HCT116 (cell line): ENCODE measurements at regions of chr10 and their contacts with region 1.

Region 1: DNA sequence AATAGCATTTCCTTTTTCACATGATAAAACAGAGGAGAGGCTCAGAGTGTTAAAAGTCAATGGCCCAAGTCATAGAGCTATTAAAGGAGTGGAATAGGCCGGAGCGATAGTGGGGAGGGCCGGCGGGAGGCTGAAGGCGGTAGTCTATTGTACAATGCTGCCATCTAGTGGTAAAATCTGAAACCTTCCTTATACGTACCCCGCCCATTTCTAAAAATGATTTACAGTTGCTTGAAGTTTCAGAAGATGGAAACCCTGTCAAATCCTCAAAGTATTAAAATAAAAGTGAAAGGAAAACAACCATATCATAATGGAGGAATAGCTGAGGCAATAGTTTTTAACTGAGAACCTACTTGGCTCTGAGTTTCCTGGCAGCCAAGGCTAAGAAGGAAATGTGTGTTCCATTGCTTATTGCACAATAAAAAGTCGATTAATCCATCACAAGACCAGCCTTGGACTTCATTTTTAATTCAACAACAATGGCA is 209.1 kb downstream of the CCSER2 start:
- DNase-seq: peak; percentile 40
- ATAC-seq: peak; percentile 65
- H3K4me3 ChIP-seq: no peak overlapping the region
- H3K27ac ChIP-seq: no peak overlapping the region
- H3K4me1 ChIP-seq: peaks cover 0 to 24% of the 10 kb centered on the region in 2 experiments; a peak in 2 of 4 replicates
- H3K27me3 ChIP-seq: no peaks in the 10 kb centered on the region
- CTCF ChIP-seq: peak; percentile 51 to 90 (median 90); a peak in 5 of 6 replicates
- POLR2A ChIP-seq: no peak
- RAD21 ChIP-seq: peak; percentile 97

Region 2: DNA sequence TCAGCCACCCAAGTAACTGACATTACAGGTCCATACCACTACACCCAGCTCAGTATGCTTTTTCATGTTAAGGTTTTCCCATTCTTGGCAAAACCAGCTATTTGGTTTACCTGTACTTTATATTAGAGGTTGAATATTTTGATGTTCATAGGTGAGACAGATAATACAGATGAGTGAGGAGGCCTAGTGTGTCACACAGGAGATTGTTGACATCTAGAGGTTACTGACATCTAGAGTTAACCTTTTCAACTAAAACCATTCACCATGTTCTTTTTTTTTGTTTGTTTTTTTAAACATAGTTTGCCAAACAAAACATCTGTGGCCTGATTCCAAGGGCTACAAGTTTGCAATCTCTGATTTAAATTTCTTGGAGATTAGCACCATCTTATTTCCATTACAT is 390.1 kb before region 1 on chr10:
- CTCF ChIA-PET with region 1: interaction called, 3 read pairs
- POLR2A ChIA-PET with region 1: no interaction called
- RAD21 ChIA-PET with region 1: no interaction called
- intact Hi-C with region 1: loop called (anchors 5 kb)
- DNase-seq: no peak
- ATAC-seq: no peak
- H3K4me3 ChIP-seq: no peak overlapping the region
- H3K27ac ChIP-seq: no peak overlapping the region
- H3K4me1 ChIP-seq: no peaks in the 10 kb centered on the region
- H3K27me3 ChIP-seq: no peaks in the 10 kb centered on the region
- CTCF ChIP-seq: no peak
- POLR2A ChIP-seq: no peak
- RAD21 ChIP-seq: no peak

Region 3: DNA sequence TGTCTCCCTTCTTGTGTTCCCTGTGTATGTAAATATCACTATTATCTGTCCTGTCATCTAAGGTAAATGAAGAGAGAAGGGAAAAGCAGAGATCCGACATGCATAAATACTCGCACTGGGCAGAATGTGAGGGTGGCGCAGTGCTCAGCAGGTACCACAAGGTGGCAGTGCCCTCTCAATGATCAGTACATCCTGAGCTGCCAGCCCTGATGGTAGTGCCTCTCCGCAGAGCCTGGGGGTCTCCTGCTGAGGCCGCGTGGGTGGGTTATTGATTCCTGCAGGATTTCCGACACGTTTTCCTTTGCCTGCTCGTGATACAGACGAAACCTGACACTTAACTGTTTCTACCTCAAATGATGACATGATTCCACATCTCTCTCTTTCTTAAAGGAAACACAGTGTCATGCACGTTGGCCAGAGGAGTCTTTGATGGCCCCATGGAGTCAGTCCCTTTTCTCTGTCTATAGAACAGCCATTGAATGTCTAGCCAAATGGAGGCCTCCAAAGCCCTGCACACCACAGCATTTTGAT is 272.8 kb before region 1 on chr10:
- CTCF ChIA-PET with region 1: interaction called, 268 read pairs
- POLR2A ChIA-PET with region 1: interaction called, 4 read pairs
- RAD21 ChIA-PET with region 1: interaction called, 9 to 16 read pairs
- intact Hi-C with region 1: loop called (anchors 1 kb)
- DNase-seq: peak; percentile 48
- ATAC-seq: peak; percentile 95
- H3K4me3 ChIP-seq: no peak overlapping the region
- H3K27ac ChIP-seq: no peak overlapping the region
- H3K4me1 ChIP-seq: peaks cover 0 to 17% of the 10 kb centered on the region in 2 experiments; a peak in 2 of 4 replicates
- H3K27me3 ChIP-seq: no peaks in the 10 kb centered on the region
- CTCF ChIP-seq: peak; percentile 80 to 96 (median 91)
- POLR2A ChIP-seq: no peak
- RAD21 ChIP-seq: peak; percentile 95

Region 4: DNA sequence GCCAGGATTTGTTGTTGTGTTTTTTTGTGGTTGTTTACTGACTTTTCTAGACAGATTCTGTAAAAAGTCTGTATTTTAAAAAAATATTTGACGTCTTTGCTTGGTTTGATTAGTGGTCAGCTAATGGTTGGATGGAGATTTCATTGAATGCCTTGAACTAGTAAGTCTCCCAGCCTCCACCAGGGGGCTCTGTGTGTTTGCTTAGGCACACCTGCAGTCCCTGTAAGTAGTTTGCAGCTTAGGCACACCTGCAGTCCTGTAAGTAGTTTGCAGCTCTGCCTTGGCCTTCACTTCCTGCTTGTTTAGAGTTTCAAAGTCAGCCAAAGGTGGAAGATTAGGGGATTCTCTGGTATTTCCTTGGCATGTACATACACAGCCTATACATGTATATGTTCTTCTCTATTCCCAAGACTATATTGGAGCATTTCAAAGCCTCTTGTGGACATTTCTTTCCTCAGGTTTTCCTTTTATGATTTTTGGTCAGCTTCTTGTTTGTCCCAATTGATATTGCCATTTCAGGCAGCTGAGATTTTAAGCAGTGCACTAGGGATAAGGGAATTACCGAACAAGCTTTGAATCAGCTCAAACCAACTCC is 107.5 kb before region 1 on chr10:
- CTCF ChIA-PET with region 1: interaction called, 53 read pairs
- POLR2A ChIA-PET with region 1: no interaction called
- RAD21 ChIA-PET with region 1: interaction called, 18 to 19 read pairs
- intact Hi-C with region 1: loop called (anchors 1 kb)
- DNase-seq: peak; percentile 61
- ATAC-seq: peak; percentile 98
- H3K4me3 ChIP-seq: no peak overlapping the region
- H3K27ac ChIP-seq: no peak overlapping the region
- H3K4me1 ChIP-seq: peaks cover 0 to 6% of the 10 kb centered on the region in 2 experiments; a peak in 2 of 4 replicates
- H3K27me3 ChIP-seq: no peaks in the 10 kb centered on the region
- CTCF ChIP-seq: peak; percentile 78 to 92 (median 90)
- POLR2A ChIP-seq: no peak
- RAD21 ChIP-seq: peak; percentile 84

Region 5: DNA sequence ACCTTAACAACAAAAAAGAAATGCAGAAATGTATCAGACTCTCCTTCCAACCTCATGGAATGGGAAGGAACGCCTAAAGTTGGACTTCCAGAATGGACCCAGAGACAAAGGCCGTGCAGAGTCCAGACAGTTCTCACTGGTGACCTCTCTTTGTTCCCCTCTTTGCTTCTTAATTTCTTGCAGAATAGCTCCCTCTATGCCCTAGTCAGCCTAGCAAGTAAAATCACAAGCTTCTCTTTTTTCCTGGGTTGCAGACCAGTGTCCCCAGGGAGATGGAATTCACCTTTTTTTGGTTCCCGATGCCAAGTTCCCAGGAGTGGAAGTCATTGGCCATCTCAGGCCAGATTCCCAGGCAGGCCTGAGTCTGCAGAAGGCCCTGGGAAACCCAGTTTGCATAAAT is 68.9 kb after region 1 on chr10:
- CTCF ChIA-PET with region 1: interaction called, 12 read pairs
- POLR2A ChIA-PET with region 1: no interaction called
- RAD21 ChIA-PET with region 1: no interaction called
- intact Hi-C with region 1: no loop called
- DNase-seq: no peak
- ATAC-seq: no peak
- H3K4me3 ChIP-seq: no peak overlapping the region
- H3K27ac ChIP-seq: no peak overlapping the region
- H3K4me1 ChIP-seq: no peaks in the 10 kb centered on the region
- H3K27me3 ChIP-seq: peaks cover 47% of the 10 kb centered on the region
- CTCF ChIP-seq: no peak
- POLR2A ChIP-seq: no peak
- RAD21 ChIP-seq: no peak

Region 6: DNA sequence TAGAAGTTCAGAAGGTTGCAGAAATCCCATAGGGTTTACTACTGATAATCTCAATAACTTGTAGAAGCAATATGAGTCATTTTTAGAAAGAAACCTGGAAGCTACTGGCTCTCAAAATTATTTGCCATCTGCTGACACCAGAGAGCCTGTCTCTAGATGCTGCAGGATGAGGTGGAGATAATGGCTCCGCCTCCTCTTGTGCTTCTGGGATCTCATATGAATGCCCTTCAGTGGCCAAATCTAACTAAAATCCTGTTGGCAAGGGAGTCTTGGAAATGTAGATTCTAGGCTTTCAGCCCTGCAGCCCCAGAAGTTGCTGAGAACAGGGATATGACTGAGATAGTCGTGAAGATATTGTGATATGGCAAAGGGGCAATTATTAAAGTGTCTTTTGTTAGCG is 139.0 kb after region 1 on chr10:
- CTCF ChIA-PET with region 1: no interaction called
- POLR2A ChIA-PET with region 1: no interaction called
- RAD21 ChIA-PET with region 1: no interaction called
- intact Hi-C with region 1: no loop called
- DNase-seq: no peak
- ATAC-seq: no peak
- H3K4me3 ChIP-seq: no peak overlapping the region
- H3K27ac ChIP-seq: no peak overlapping the region
- H3K4me1 ChIP-seq: no peaks in the 10 kb centered on the region
- H3K27me3 ChIP-seq: peaks cover 53% of the 10 kb centered on the region
- CTCF ChIP-seq: no peak
- POLR2A ChIP-seq: no peak
- RAD21 ChIP-seq: no peak

Region 7: DNA sequence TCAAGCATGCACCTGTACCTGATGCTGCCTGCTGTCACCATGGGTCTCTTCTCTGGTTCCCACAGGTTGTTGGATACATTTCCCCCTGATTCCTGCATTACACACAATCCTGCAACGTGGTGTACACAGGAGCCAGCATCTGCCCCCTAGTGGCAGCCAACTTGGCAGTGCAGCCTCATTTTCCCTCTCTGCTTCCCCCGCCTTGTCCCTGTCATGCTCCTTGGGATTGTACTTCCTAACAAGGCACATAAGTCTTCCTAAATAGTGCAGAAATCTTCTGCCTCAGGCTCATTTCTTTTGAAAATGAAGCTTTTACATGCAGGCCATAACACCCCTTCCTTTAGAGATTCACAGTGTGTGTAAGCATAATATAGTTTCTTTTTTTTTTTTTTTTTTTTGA is 178.4 kb after region 1 on chr10:
- CTCF ChIA-PET with region 1: interaction called, 8 read pairs
- POLR2A ChIA-PET with region 1: no interaction called
- RAD21 ChIA-PET with region 1: no interaction called
- intact Hi-C with region 1: loop called (anchors 1 kb)
- DNase-seq: peak; percentile 31
- ATAC-seq: peak; percentile 98
- H3K4me3 ChIP-seq: no peak overlapping the region
- H3K27ac ChIP-seq: no peak overlapping the region
- H3K4me1 ChIP-seq: no peaks in the 10 kb centered on the region
- H3K27me3 ChIP-seq: peaks cover 36% of the 10 kb centered on the region
- CTCF ChIP-seq: peak; percentile 59 to 93 (median 88); a peak in 5 of 6 replicates
- POLR2A ChIP-seq: no peak
- RAD21 ChIP-seq: peak; percentile 54

Region 8: DNA sequence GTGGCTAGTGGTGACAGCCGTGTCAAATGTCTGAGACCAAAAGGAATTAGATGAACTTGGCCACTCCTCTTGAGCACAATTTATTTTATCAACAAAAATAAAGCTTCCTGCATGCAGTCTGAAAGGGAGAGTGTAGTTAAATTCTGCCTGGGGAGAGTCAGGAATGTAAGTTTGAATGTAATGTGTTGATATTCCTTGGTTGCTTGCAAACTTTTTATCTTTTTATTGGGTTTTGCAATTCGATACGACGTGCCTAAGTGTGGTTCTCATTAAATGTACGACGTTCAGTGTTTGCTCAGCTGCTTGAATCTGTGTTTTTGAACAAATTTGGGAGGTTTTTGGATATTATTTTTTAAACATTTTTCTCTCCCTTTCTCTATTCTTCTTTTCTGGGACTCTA is 630.8 kb after region 1 on chr10:
- CTCF ChIA-PET with region 1: no interaction called
- POLR2A ChIA-PET with region 1: no interaction called
- RAD21 ChIA-PET with region 1: no interaction called
- intact Hi-C with region 1: no loop called
- DNase-seq: no peak
- ATAC-seq: no peak
- H3K4me3 ChIP-seq: no peak overlapping the region
- H3K27ac ChIP-seq: no peak overlapping the region
- H3K4me1 ChIP-seq: no peaks in the 10 kb centered on the region
- H3K27me3 ChIP-seq: peaks cover 25% of the 10 kb centered on the region; the same call in 1 of the 2 replicates
- CTCF ChIP-seq: no peak
- POLR2A ChIP-seq: no peak
- RAD21 ChIP-seq: no peak